Posterior cingulate gyrus (tissue), 11 donors: ENCODE measurements at regions of chr6 and their contacts with region 1.

Region 1: GRCh38 chr6:138211027-138211581 is 7.2 kb downstream of the PBOV1 start:
- DNase-seq: peak in 1 of 10 donors; percentile 47

Region 2: DNA sequence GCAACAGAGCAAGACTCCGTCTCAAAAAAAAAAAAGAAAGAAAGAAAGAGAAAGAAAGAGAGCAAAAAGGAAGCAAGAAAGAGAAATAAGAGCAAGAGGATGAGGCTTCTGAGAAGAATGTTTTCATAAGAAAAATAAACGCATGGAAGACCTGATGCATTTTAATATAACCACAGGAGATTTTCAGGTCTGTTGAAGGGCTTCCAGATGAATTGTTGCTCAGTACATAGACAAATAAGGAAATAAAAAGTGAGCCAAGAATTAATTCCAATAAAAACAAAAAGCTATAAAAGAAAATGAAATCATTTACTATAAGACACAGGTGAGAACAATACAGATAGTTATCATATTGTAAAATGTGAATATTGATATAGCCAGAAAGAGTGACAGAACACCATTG is 147.4 kb before region 1 on chr6:
- intact Hi-C with region 1: no loop called
- DNase-seq: no peak

Region 3: GRCh38 chr6:138278326-138278725 is 67.2 kb after region 1 on chr6:
- intact Hi-C with region 1: loop called (anchors 10 kb)
- DNase-seq: peak in 8 of 10 donors; percentile 40 to 94 (median 67)